ENCODE measurements at regions of chr12 and their contacts with region 1.

Region 1: GRCh38 chr12:21472197-21472823 is 29.1 kb downstream of the RECQL start:
- DNase-seq: no peak

Region 2: DNA sequence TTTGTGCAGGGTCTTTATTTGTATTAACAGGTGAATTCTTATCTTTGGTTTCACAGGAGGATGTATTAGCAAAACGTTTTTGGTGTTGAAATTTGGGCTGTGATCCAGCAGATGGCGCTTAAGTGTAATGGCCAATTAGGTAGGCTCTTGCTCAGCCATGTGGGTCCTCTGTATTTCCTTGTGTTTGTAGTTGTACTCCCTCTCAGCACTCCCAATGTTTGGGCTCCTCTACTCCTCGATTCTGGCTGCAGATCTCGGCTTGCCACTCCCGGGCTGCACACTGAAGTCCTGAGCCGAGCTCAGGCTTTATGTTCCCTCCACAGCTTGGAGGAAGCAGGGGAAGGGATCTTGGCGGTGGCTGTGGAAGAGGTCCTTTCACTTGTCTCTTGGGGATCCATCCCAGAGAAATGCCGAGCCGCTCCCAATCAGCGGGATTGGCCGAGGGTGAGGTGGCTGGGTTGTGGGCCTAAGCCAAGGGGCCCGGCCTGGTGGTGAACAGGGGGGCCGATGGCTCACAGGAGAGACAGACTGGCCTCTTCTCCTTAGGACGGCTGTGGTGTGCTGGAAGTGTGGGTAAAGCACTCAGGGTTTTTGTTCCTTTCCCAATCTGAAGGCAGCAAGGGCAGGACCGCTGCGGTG is 1899.3 kb before region 1 on chr12:
- intact Hi-C with region 1: loop called in 1 of 2 experiments (anchors 5 kb)
- DNase-seq: peak; percentile 79